Keratinocyte (primary cell): ENCODE measurements at regions of chr1 and their contacts with region 1.

Region 1: DNA sequence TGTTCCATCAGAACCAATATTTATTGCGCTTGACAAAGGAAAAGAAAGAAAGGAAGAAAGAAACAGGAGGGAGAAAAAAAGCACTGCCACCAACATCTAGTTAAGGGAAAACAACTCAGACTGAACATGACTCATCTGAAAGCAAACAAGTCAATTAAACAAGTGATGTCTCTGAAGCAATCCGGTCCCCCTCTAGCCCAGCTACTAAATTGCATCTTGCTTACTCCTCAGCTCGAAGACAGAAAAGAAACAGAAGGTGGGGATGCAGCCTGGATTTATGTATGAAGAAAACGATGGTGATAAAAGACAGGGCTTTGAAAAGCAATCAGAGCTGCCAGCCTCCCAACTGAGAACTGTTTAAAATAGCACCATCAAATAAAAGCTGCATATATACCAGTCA is 188.2 kb downstream of the OMA1 start:
- DNase-seq: no peak
- H3K4me3 ChIP-seq: no peak overlapping the region
- H3K27ac ChIP-seq: no peak overlapping the region
- H3K4me1 ChIP-seq: no peaks in the 10 kb centered on the region
- H3K27me3 ChIP-seq: no peaks in the 10 kb centered on the region
- CTCF ChIP-seq: no peak

Region 2: DNA sequence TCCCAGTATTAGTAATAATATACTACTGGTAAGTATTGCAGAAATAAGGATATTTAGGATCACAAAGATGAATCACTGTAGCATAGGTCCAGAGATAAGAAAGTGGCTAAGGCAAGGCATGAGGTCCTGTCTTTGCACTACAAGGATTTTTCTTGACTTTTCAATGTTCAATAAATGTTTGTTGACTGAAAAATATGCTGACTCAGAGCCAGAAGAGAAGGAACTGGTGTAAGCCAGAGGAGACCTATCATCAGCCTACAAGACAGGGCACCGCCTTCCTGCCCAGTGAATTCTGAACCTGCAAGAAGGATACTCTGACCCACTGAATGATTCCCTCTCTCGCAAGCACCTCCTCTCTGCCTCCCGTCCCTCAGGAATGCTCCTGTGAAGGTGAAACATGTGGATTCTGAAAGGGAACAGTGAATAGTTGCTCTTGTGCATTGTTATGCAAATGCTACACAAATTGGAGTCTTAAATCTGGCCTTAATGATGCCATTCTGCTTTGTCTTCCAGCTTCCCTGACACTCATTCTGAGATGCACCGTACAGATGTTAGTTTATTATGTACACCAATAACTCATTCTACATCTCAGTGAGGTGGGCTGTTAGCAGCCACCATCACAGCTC is 351.8 kb before region 1 on chr1:
- dilution Hi-C with region 1: no loop called
- DNase-seq: no peak
- H3K4me3 ChIP-seq: no peak overlapping the region
- H3K27ac ChIP-seq: no peak overlapping the region
- H3K4me1 ChIP-seq: no peaks in the 10 kb centered on the region
- H3K27me3 ChIP-seq: peaks cover 2% of the 10 kb centered on the region
- CTCF ChIP-seq: no peak

Region 3: DNA sequence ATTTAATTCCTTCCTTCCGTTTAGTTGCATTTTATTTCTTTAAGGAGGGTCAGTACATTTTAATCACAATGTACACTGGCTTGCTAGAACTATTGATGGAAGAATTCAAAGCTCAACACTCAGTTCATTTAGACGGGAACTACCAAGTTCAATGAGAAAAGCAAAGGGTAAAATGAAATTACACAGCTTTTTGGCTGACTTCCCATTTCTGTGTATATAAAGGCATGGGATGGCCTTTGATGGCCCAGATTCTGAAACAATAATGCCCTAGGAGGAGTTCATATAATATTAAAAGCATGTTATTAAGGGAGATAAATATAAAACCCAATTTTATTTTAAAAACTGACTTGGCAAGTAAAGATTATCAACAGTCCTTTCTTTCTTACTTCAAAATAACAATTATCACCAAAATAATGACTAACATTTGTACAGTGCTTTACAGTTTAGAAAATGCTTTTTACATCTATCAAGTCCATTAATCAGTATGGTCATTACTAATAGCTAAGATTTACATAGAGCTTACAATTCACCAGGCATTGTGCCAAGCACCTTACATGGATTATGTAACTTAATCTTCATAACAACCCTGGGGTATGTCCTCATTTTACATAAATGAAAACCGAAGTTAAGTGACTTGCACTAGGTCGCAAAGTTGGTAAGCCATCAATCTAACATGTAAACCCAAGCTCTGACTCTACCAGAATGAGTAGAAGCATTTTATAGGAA is 214.2 kb before region 1 on chr1:
- dilution Hi-C with region 1: no loop called
- DNase-seq: no peak
- H3K4me3 ChIP-seq: no peak overlapping the region
- H3K27ac ChIP-seq: no peak overlapping the region
- H3K4me1 ChIP-seq: no peaks in the 10 kb centered on the region
- H3K27me3 ChIP-seq: peaks cover 4% of the 10 kb centered on the region
- CTCF ChIP-seq: no peak

Region 4: GRCh38 chr1:58304346-58304975 is 53.9 kb before region 1 on chr1:
- dilution Hi-C with region 1: no loop called
- DNase-seq: no peak
- H3K4me3 ChIP-seq: no peak overlapping the region
- H3K27ac ChIP-seq: no peak overlapping the region
- H3K4me1 ChIP-seq: no peaks in the 10 kb centered on the region
- H3K27me3 ChIP-seq: no peaks in the 10 kb centered on the region
- CTCF ChIP-seq: no peak

Region 5: GRCh38 chr1:58392083-58392482 is 33.7 kb after region 1 on chr1:
- dilution Hi-C with region 1: loop called (anchors 5 kb)
- DNase-seq: no peak
- H3K4me3 ChIP-seq: no peak overlapping the region
- H3K27ac ChIP-seq: no peak overlapping the region
- H3K4me1 ChIP-seq: peaks cover 25% of the 10 kb centered on the region
- H3K27me3 ChIP-seq: no peaks in the 10 kb centered on the region
- CTCF ChIP-seq: no peak